ENCODE measurements at regions of chr11 and their contacts with region 1.

Region 1: DNA sequence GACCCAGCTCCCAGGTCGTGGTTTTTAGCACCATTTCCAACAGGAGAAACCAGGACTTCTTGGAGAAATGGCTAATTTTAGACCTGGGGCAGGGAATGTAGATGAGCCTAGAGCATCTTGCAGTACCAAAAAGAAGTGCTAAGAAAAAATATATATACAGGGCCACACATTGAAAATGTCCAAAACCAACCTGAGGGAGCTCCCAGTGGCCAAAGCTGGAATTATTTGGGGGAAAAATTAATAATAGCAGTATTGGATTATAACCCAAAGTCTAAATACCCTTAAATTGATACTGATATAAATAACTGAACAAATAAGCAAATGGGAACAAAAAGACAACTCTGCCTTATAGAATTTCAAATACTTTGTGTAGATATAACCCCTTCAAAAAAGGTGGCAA is 108.0 kb downstream of the PARVA start:
- DNase-seq: no peak
- ATAC-seq: no peak
- H3K4me3 ChIP-seq: no peak overlapping the region
- H3K27ac ChIP-seq: no peak overlapping the region
- H3K4me1 ChIP-seq: peaks cover 11% of the 10 kb centered on the region
- H3K27me3 ChIP-seq: no peaks in the 10 kb centered on the region

Region 2: GRCh38 chr11:12411806-12412727 is 73.3 kb before region 1 on chr11:
- intact Hi-C with region 1: loop called in 2 of 4 experiments (anchors 10 kb)
- DNase-seq: peak; percentile 70 to 83 (median 78)
- ATAC-seq: peak; percentile 78 to 86
- H3K4me3 ChIP-seq: no peak overlapping the region
- H3K27ac ChIP-seq: peak overlapping the region; percentile 28
- H3K4me1 ChIP-seq: peaks cover 25% of the 10 kb centered on the region
- H3K27me3 ChIP-seq: no peaks in the 10 kb centered on the region

Region 3: DNA sequence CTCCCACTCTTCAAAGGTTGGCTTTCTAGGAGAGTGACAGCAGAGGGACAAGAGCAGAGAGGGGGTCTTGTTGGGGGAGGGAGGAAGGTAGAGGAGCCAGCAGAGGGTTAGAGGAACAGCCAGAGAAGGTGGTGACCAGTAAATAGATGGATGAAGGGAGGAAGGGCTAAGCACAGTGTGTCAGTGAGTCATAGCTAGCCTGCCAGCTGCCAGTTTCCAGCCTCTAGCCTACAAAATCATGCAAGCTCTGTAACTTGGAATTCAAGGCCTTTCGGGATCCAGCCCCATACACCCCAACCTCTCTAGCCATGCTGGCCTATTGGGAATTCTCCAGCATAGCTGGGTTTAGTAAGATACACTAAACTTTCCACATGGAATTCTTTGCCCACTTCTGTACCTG is 41.5 kb after region 1 on chr11:
- intact Hi-C with region 1: no loop called
- DNase-seq: peak in 1 of 3 donors; percentile 73
- ATAC-seq: peak; percentile 54 to 60
- H3K4me3 ChIP-seq: no peak overlapping the region
- H3K27ac ChIP-seq: no peak overlapping the region
- H3K4me1 ChIP-seq: peaks cover 4% of the 10 kb centered on the region
- H3K27me3 ChIP-seq: no peaks in the 10 kb centered on the region

Region 4: GRCh38 chr11:12922980-12923507 is 437.7 kb after region 1 on chr11:
- intact Hi-C with region 1: no loop called
- DNase-seq: no peak
- ATAC-seq: peak in 1 of 2 donors; percentile 33
- H3K4me3 ChIP-seq: no peak overlapping the region
- H3K27ac ChIP-seq: no peak overlapping the region
- H3K4me1 ChIP-seq: peaks cover 2% of the 10 kb centered on the region
- H3K27me3 ChIP-seq: no peaks in the 10 kb centered on the region